Endothelial cell of umbilical vein (primary cell): ENCODE measurements at regions of chr5 and their contacts with region 1.

Region 1: DNA sequence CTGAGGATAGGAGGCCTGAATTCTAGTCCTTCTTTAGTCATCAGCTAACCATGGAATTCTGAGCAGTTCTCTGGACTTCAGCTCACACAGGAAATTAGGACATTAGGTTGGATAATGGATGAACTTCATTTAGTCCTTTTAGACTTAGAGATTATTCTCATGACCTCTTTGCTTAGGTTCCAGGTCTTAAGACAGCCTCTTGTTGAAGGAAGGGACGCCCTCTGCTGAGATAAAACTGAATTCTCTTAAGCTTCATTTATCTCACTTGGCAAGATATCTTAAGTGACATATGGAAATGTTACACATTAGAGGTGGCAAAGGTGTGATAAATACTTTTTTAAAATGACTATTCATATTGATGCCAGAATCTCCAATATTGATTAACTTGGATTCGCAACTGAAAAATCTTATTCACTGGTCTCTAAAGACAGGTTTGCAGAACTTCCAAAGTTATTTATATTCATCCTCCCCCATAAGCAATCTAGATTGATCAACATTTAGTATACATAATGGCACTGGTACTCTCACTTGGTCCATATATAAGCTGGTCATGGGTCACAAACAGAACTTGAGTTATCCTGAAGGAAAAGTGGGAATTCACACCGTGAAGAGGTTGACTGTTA is 16.9 kb upstream of the ZNF366 start:
- DNase-seq: peak; percentile 89
- H3K4me3 ChIP-seq: no peak overlapping the region
- H3K27ac ChIP-seq: peak overlapping the region; percentile 54
- H3K4me1 ChIP-seq: peaks cover 7% of the 10 kb centered on the region
- H3K27me3 ChIP-seq: no peaks in the 10 kb centered on the region
- CTCF ChIP-seq: peak; percentile 39 to 42
- POLR2A ChIP-seq: no peak

Region 2: DNA sequence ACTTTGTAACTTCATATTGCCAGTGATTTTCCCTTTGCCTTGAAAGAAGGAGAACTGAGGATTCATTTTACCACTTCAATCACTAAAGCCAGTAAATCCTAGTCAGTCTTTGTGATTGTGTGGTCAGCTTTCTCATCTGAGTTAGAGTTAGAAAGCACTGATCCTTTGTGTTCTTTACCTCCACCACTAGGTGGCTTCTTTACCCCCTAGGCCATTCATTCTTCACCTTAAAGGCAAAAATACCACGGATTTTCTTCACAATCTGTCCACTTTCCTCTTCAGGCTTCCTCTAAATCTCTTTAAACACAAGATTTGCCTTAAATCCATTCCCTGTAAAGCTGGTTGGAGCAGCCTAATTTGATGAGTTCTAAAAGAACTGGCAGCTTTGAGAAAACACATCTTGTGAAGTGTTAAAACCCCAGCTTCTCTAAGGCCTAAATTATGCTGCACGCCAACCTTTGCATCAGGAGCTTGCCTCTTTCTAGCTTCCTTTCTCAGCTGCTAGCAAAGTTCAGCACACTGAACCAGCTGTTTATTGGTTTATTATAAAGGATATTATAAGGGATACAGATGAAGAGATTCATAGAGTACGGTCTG is 1048.2 kb before region 1 on chr5:
- CTCF ChIA-PET with region 1: no interaction called
- POLR2A ChIA-PET with region 1: no interaction called
- dilution Hi-C with region 1: no loop called
- intact Hi-C with region 1: no loop called
- DNase-seq: peak; percentile 39
- H3K4me3 ChIP-seq: no peak overlapping the region
- H3K27ac ChIP-seq: no peak overlapping the region
- H3K4me1 ChIP-seq: peaks cover 6% of the 10 kb centered on the region
- H3K27me3 ChIP-seq: no peaks in the 10 kb centered on the region
- CTCF ChIP-seq: peak; percentile 65 to 72
- POLR2A ChIP-seq: no peak

Region 3: GRCh38 chr5:72141440-72142355 is 382.4 kb before region 1 on chr5:
- CTCF ChIA-PET with region 1: no interaction called
- POLR2A ChIA-PET with region 1: no interaction called
- dilution Hi-C with region 1: no loop called
- intact Hi-C with region 1: no loop called
- DNase-seq: peak; percentile 89
- H3K4me3 ChIP-seq: no peak overlapping the region
- H3K27ac ChIP-seq: peak overlapping the region; percentile 73
- H3K4me1 ChIP-seq: peaks cover 47% of the 10 kb centered on the region
- H3K27me3 ChIP-seq: no peaks in the 10 kb centered on the region
- CTCF ChIP-seq: no peak
- POLR2A ChIP-seq: no peak

Region 4: DNA sequence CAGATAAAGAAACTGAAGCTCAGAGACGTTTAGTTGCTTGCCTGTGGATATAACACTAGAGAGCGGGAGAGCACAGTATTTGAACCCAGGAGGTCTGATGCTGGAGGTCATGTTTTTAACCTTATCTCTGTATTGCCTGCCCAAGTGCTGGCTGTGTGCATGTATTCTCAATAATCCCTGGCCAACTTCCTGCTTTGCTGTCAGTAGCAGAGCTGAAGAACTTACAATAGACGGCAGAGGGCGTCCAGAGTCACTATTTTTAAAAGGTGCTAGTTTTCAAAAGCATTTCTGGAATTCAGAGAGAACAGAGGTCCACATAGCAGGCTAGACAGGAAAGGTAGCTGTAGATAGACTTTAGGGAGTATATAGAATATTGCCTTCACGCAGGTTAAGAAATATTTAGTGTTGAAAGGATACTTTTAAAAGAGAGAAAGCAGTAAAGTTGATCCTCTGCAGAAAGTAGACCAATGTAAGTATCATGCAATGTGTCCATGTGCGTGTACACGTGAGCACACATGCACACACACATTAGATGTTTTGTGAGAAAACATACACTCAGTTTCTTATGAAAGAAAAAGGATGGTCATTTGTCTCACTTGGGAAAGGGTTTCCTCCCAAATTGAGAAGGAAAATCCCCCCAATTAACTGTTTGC is 157.6 kb before region 1 on chr5:
- CTCF ChIA-PET with region 1: interaction called, 223 read pairs
- POLR2A ChIA-PET with region 1: no interaction called
- dilution Hi-C with region 1: no loop called
- intact Hi-C with region 1: loop called (anchors 1 kb)
- DNase-seq: peak; percentile 87
- H3K4me3 ChIP-seq: no peak overlapping the region
- H3K27ac ChIP-seq: peak overlapping the region; percentile 23
- H3K4me1 ChIP-seq: peaks cover 23% of the 10 kb centered on the region
- H3K27me3 ChIP-seq: no peaks in the 10 kb centered on the region
- CTCF ChIP-seq: peak; percentile 66 to 76
- POLR2A ChIP-seq: no peak

Region 5: GRCh38 chr5:72394688-72395087 is 129.4 kb before region 1 on chr5:
- CTCF ChIA-PET with region 1: interaction called, 26 read pairs
- POLR2A ChIA-PET with region 1: no interaction called
- dilution Hi-C with region 1: no loop called
- intact Hi-C with region 1: loop called (anchors 1 kb)
- DNase-seq: peak; percentile 46
- H3K4me3 ChIP-seq: no peak overlapping the region
- H3K27ac ChIP-seq: no peak overlapping the region
- H3K4me1 ChIP-seq: peaks cover 19% of the 10 kb centered on the region
- H3K27me3 ChIP-seq: no peaks in the 10 kb centered on the region
- CTCF ChIP-seq: peak; percentile 50 to 56
- POLR2A ChIP-seq: no peak

Region 6: DNA sequence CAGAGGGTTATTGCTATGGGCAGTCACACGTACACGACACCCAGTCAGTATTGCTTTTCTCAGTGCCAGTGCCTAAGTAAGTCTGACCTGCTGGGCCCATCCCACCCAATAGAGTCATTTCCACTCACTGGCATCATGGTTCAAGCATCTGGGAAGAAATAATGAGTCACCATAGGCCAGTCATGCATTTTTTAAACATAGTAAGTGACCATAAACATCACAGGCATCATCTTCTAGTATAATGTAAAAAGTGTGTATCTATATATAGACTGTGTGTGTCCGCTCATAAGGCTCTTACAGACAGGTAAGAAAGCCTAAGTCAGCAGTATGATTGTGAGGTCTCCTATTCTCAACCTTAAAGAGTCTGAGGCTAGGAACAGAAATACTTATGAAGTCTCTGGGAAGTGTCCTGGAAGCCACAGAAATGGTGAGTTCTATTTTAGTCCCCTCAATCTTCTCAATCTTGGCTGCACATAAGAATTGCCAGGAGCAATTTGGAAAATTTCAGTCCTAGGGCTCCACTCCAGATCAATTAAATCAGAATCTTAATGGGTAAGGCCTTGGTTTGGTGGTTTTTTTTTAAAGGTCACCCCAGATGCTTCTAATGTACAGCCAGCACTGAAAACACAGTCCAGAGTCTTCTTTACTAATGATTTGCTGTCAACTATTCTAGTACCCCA is 82.1 kb before region 1 on chr5:
- CTCF ChIA-PET with region 1: interaction called, 20 read pairs
- POLR2A ChIA-PET with region 1: no interaction called
- dilution Hi-C with region 1: no loop called
- intact Hi-C with region 1: no loop called
- DNase-seq: peak; percentile 88
- H3K4me3 ChIP-seq: no peak overlapping the region
- H3K27ac ChIP-seq: peak overlapping the region; percentile 69
- H3K4me1 ChIP-seq: peaks cover 20% of the 10 kb centered on the region
- H3K27me3 ChIP-seq: no peaks in the 10 kb centered on the region
- CTCF ChIP-seq: no peak
- POLR2A ChIP-seq: no peak

Region 7: GRCh38 chr5:72486371-72486770 is 37.7 kb before region 1 on chr5:
- CTCF ChIA-PET with region 1: interaction called, 15 read pairs
- POLR2A ChIA-PET with region 1: no interaction called
- dilution Hi-C with region 1: no loop called
- intact Hi-C with region 1: no loop called
- DNase-seq: peak; percentile 79
- H3K4me3 ChIP-seq: no peak overlapping the region
- H3K27ac ChIP-seq: peak overlapping the region; percentile 67
- H3K4me1 ChIP-seq: peaks cover 16% of the 10 kb centered on the region
- H3K27me3 ChIP-seq: no peaks in the 10 kb centered on the region
- CTCF ChIP-seq: no peak
- POLR2A ChIP-seq: no peak

Region 8: DNA sequence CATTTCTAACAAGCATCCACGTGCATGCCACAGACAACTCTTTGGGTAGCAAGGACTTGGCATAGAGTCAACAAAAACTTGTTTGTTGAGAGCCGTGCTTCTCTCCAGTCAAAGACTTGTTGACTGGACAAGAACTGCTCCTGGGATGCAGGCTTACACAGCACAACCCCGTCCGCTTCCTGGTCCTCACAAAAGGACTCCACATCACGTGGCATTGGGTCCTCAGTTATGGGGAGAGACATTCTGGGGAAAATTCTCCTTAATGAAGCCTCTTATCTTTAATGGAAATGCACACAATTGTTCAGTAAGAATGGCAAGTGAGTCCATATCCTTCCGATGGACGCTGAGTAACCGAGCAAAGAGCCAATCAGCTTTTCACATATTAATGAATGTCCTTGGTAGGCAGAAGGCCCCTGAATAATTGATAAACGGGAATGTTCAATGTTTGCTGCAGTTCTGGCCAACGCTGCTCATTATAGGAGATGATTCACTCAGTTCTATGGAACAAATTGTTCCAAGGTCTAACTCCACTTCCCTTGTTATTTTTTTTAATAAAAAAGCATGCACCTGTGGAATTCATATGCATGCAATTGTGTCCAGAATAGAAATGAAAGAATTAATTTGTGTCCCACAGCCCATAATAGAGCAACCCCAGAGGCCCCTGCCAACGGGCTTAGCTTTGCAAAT is 80.2 kb after region 1 on chr5:
- CTCF ChIA-PET with region 1: interaction called, 15 read pairs
- POLR2A ChIA-PET with region 1: no interaction called
- dilution Hi-C with region 1: no loop called
- intact Hi-C with region 1: loop called (anchors 1 kb)
- DNase-seq: peak; percentile 99
- H3K4me3 ChIP-seq: no peak overlapping the region
- H3K27ac ChIP-seq: peak overlapping the region; percentile 97
- H3K4me1 ChIP-seq: peaks cover 64% of the 10 kb centered on the region
- H3K27me3 ChIP-seq: no peaks in the 10 kb centered on the region
- CTCF ChIP-seq: no peak
- POLR2A ChIP-seq: peak; percentile 25

Region 9: DNA sequence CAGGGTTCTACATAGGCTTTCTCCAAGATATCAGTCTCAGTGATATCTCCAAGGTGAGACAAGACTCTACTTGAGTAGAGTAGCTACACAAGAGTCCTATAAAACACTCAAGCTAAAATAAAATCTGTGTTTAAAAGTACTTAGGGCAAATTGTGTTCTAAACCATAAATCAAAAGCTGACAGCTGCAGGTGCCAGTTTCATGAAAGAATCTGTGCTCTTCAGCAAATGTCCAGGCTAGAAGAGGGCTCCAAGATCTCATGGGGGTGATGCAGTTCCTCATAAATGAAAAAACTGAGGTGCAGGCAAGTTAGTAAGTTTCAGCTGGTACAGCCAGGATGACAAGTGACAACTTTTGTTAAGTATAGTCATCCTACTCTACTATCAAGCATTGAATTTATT is 149.6 kb after region 1 on chr5:
- CTCF ChIA-PET with region 1: no interaction called
- POLR2A ChIA-PET with region 1: no interaction called
- dilution Hi-C with region 1: no loop called
- intact Hi-C with region 1: no loop called
- DNase-seq: no peak
- H3K4me3 ChIP-seq: no peak overlapping the region
- H3K27ac ChIP-seq: no peak overlapping the region
- H3K4me1 ChIP-seq: no peaks in the 10 kb centered on the region
- H3K27me3 ChIP-seq: peaks cover 2 to 3% of the 10 kb centered on the region in 2 experiments
- CTCF ChIP-seq: no peak
- POLR2A ChIP-seq: no peak